Activated CD4-positive, alpha-beta T cell treated with anti-CD3 and anti-CD28 coated beads for 36 hours (primary cell): ENCODE measurements at regions of chr7 and their contacts with region 1.

Region 1: DNA sequence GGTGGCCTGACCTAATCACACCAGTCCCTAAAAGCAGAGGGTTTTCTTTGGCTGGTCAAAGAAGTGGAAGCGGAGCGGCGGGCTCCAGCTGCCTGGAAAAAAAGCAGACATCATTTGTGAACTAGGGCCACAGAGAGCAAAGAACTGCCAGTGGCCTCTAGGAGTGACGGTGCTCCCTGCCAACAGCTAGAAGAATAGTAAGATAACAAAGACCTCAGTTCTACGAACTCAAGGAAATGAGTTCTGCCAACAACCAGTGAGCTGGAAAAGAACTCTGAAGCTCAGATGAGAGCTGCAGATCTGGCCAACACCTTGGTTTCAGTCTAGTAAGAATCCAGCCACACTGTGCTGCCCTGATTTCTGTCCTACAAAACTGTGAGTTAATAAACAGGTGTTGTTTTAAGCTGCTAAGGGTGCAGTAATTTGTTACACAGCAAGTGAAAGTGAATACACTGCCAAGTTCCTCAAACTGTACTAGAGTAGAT is 178.0 kb downstream of the SRPK2 start:
- DNase-seq: no peak
- ATAC-seq: no peak
- H3K4me3 Mint-ChIP-seq: no peak overlapping the region
- H3K27ac Mint-ChIP-seq: peak overlapping the region; percentile 38
- H3K4me1 Mint-ChIP-seq: peaks cover 81% of the 10 kb centered on the region
- H3K27me3 Mint-ChIP-seq: no peaks in the 10 kb centered on the region

Region 2: DNA sequence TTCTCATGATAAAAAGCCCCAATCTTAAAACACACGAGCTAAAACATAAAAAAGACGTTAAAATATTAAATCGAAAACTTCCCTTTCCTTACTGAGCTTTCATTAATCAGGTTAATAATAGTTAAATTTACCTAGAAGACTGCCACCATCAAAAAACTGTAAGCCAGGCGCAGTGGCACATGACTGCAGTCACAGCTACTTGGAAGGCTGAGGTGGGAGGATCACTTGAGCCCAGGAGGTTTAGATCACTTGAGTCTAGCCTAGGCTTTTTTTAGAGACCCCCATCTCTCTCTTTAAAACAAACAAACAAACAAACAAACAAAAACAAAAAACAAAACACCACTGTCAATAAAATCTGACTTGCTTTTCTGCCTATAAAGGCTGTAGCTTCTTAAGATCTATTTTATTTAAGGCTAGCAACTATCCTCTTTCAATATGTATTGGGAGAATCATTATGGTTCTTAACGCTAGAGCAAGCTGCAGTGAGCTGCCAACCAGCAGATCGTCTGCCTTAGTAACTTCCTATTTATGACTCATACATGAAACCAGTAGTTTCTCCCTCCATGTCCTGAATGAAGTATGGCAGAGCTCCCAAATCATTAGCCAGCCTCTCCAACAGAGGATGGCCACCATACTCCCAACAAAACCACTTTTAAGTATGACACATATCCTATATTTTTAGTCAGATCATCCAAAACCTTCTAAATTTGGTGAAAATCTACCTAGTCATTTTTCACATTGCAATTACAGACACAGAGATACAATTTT is 14.3 kb after region 1 on chr7:
- CTCF ChIA-PET with region 1: interaction called, 10 read pairs
- POLR2A ChIA-PET with region 1: interaction called, 4 read pairs
- intact Hi-C with region 1: no loop called
- DNase-seq: peak; percentile 19
- ATAC-seq: peak; percentile 94
- H3K4me3 Mint-ChIP-seq: no peak overlapping the region
- H3K27ac Mint-ChIP-seq: no peak overlapping the region
- H3K4me1 Mint-ChIP-seq: peaks cover 26% of the 10 kb centered on the region
- H3K27me3 Mint-ChIP-seq: no peaks in the 10 kb centered on the region

Region 3: GRCh38 chr7:105278973-105279687 is 68.4 kb after region 1 on chr7:
- CTCF ChIA-PET with region 1: no interaction called
- POLR2A ChIA-PET with region 1: no interaction called
- intact Hi-C with region 1: no loop called
- DNase-seq: no peak
- ATAC-seq: no peak
- H3K4me3 Mint-ChIP-seq: no peak overlapping the region
- H3K27ac Mint-ChIP-seq: no peak overlapping the region
- H3K4me1 Mint-ChIP-seq: peaks cover 36% of the 10 kb centered on the region
- H3K27me3 Mint-ChIP-seq: no peaks in the 10 kb centered on the region

Region 4: GRCh38 chr7:105309235-105310169 is 98.7 kb after region 1 on chr7:
- CTCF ChIA-PET with region 1: no interaction called
- POLR2A ChIA-PET with region 1: interaction called, 3 read pairs
- intact Hi-C with region 1: loop called (anchors 5 kb)
- DNase-seq: peak; percentile 16
- ATAC-seq: peak; percentile 39
- H3K4me3 Mint-ChIP-seq: no peak overlapping the region
- H3K27ac Mint-ChIP-seq: peak overlapping the region; percentile 30
- H3K4me1 Mint-ChIP-seq: peaks cover 56% of the 10 kb centered on the region
- H3K27me3 Mint-ChIP-seq: no peaks in the 10 kb centered on the region

Region 5: DNA sequence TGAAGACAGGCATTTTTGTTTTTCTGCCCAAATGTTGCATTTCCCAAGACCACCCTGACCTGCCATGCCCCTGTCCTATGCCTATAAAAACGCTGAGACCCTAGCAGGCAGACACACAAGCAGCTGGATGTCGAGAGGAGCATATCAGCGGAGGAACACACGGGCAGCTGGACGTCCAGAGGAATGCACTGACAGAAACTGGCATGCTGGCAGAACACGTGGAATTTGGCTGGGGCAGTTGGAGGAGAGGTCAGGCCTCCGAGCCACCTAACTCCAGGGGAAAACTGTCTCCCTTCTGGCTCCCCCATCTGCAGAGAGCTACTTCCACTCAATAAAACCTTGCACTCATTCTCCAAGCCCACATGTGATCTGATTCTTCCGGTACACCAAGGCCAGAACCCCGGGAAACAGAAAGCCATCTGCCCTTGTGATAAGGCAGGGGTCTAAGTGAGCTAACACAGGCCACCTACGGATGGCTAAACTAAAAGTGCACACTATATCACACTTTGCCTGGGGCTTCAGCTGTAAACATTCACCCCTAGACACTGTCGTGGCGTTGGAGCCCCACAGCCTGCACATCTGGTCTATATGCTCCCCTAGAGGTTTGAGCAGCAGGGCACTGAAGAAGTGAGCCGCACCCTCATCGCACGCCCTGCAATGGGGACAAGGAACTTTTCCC is 742.3 kb after region 1 on chr7:
- CTCF ChIA-PET with region 1: no interaction called
- POLR2A ChIA-PET with region 1: no interaction called
- intact Hi-C with region 1: no loop called
- DNase-seq: no peak
- ATAC-seq: no peak
- H3K4me3 Mint-ChIP-seq: no peak overlapping the region
- H3K27ac Mint-ChIP-seq: no peak overlapping the region
- H3K4me1 Mint-ChIP-seq: no peaks in the 10 kb centered on the region
- H3K27me3 Mint-ChIP-seq: no peaks in the 10 kb centered on the region